Ascending aorta (tissue), 2 donors: ENCODE measurements at regions of chr2 and their contacts with region 1.

Region 1: DNA sequence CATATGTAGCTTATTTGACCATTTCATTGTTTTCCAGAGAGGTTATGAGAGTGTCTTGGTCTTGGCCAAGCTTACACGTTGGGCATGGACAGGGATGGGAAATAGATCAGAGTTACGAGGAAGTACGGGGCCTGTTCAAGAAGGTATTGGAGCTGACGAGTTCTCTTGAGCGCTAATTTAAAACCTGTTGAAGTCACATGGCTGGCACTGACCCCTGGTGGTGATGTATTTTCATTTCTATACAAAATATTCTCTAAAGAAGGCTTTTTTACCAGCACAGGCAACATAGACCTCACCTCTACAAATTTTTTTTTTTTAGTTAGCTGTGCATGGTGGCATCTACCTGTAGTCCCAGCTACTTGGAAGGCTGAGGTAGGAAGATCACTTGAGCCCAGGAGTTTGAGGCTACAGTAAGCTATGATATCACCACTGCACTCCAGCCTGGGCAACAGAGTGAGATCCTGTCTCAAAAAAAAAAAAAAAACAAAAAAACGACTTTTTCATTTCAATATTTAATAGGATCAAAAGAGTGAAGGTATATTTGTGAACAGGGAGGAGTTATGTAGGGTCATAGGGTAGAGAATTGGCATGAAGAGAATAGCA is 19.6 kb downstream of the UGP2 start:
- DNase-seq: peak in 1 of 2 donors; percentile 78
- H3K4me3 ChIP-seq: no peak overlapping the region
- H3K27ac ChIP-seq: peak overlapping the region in 1 of 2 donors; percentile 44
- H3K4me1 ChIP-seq: peaks cover 0 to 5% of the 10 kb centered on the region in 2 donors
- H3K27me3 ChIP-seq: no peaks in the 10 kb centered on the region
- CTCF ChIP-seq: peak; percentile 52 to 65 (median 63)

Region 2: DNA sequence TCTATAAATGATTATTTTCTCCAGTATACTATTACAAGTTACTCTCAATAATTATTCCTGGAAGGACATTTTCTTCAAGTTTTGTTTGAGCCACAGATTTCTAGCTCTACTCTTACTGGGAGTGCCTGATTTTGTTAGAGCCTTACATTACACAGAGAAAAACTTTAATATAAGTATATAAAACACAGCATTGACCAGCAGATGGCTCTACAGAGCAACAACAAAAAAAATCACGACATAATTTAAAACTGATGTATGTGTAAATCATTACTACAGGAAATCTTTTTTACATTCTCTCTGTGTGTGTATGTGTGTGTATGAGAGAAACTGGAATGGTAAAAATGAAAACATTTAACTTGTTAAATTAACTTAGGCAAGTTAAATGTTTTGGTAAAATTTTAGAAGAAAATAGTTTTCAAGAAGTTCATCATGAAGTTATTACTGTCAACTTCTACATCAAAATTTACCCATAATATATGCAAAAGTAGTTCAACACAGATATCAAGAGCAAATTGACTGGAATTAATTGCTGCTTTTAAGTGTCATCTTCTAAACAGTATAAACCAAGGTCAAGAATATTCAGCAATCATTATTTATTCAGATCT is 169.2 kb before region 1 on chr2:
- intact Hi-C with region 1: loop called (anchors 1 kb)
- DNase-seq: no peak
- H3K4me3 ChIP-seq: no peak overlapping the region
- H3K27ac ChIP-seq: no peak overlapping the region
- H3K4me1 ChIP-seq: no peaks in the 10 kb centered on the region
- H3K27me3 ChIP-seq: no peaks in the 10 kb centered on the region
- CTCF ChIP-seq: peak; percentile 52 to 64 (median 57)